H1 (cell line): ENCODE measurements at regions of chr6 and their contacts with region 1.

Region 1: GRCh38 chr6:151323791-151324487 is 67.4 kb downstream of the ZBTB2 start:
- DNase-seq: peak; percentile 63 to 97
- H3K4me3 ChIP-seq: no peak overlapping the region
- H3K27ac ChIP-seq: no peak overlapping the region
- H3K4me1 ChIP-seq: peaks cover 0 to 3% (median 0%) of the 10 kb centered on the region in 4 experiments; a peak in 3 of 7 replicates
- H3K27me3 ChIP-seq: peaks cover 0 to 6% (median 1%) of the 10 kb centered on the region in 4 experiments; a peak in 2 of 7 replicates
- CTCF ChIP-seq: peak; percentile 91 to 99 (median 98)
- EP300 ChIP-seq: no peak
- POLR2A ChIP-seq: no peak
- RAD21 ChIP-seq: peak; percentile 95 to 99

Region 2: DNA sequence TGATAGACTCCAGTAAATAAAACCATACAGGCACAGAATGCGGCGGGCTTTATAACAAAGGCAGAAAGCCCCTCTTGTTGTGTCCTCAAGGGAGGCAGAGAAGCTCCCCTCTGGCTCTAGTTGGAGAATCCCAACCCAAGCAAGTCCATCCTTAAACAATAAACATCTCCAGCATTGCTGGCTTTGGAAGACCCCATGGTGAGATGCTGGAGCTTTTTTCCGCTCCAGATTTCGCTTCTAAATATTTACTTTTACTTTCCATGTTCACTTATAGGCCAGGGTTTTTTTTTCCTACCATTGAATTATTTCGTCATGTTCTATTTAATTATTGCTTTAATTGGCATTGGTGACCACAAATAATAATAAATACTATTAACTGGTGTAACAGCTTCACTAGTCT is 282.3 kb before region 1 on chr6:
- CTCF ChIA-PET with region 1: interaction called, 10 read pairs
- POLR2A ChIA-PET with region 1: no interaction called
- DNase-seq: no peak
- H3K4me3 ChIP-seq: no peak overlapping the region
- H3K27ac ChIP-seq: no peak overlapping the region
- H3K4me1 ChIP-seq: peaks cover 8 to 18% (median 12%) of the 10 kb centered on the region in 4 experiments
- H3K27me3 ChIP-seq: no peaks in the 10 kb centered on the region
- CTCF ChIP-seq: no peak
- EP300 ChIP-seq: no peak
- POLR2A ChIP-seq: no peak
- RAD21 ChIP-seq: no peak

Region 3: DNA sequence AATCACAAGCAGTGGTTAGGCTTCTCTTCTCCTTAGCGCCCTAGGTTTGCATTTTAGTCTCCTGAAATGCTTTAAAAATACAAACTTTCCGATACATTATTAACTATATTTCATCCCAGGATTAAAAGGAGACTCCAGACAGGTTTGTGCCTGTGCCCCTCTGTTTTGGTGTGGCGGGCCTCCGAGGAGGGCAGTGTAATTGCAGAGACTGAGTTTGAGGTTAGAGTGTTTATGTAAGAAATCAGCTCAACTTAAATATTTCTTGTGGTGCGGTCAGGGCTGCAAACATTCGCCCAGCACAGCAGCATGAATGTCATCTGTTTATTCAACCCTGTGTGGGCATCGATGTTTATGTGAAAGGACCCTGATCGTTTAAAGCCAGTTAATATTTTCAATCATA is 214.6 kb before region 1 on chr6:
- CTCF ChIA-PET with region 1: interaction called, 12 read pairs
- POLR2A ChIA-PET with region 1: no interaction called
- DNase-seq: no peak
- H3K4me3 ChIP-seq: no peak overlapping the region
- H3K27ac ChIP-seq: no peak overlapping the region
- H3K4me1 ChIP-seq: no peaks in the 10 kb centered on the region
- H3K27me3 ChIP-seq: no peaks in the 10 kb centered on the region
- CTCF ChIP-seq: no peak
- EP300 ChIP-seq: no peak
- POLR2A ChIP-seq: no peak
- RAD21 ChIP-seq: no peak

Region 4: DNA sequence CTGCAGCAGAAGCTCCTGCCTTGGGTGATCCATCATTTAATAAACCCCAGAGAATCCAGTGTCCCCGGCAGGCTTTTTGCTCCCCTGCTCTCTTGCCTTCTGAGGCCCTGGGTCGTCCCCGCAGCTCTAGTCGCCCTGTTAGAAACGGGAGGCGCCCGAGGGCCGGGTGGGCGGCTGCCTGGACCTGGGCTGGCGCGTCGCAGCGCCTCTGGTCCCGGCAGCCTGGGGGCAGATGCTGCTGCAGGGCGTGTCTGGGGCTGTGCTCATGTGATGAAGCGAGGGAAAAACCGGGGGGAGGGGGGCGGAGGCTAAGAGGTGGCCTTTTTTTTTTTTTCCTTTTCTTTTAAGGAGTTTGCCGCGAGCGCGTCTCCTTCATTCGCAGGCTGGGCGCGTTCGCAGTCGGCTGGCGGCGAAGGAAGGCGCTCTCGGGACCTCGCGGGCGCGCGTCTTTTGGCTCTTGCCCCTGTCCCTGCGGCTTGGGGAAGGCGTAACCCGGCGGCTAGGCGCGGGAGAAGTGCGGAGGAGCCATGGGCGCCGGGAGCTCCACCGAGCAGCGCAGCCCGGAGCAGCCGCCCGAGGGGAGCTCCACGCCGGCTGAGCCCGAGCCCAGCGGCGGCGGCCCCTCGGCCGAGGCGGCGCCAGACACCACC is 83.8 kb before region 1 on chr6:
- CTCF ChIA-PET with region 1: interaction called, 8 read pairs
- POLR2A ChIA-PET with region 1: interaction called, 20 read pairs
- DNase-seq: peak; percentile 81 to 85
- H3K4me3 ChIP-seq: peak overlapping the region; percentile 61 to 97 (median 92)
- H3K27ac ChIP-seq: peak overlapping the region; percentile 78
- H3K4me1 ChIP-seq: peaks cover 3 to 12% (median 9%) of the 10 kb centered on the region in 4 experiments; a peak in 6 of 7 replicates
- H3K27me3 ChIP-seq: 0 out of 7 replicates have a peak, but pooled peaks cover 0 to 3% (median 0%) of the 10 kb centered on the region in 4 experiments
- CTCF ChIP-seq: peak in 1 of 3 experiments; percentile 24; a peak in 2 of 4 replicates
- EP300 ChIP-seq: no peak
- POLR2A ChIP-seq: peak; percentile 67 to 85
- RAD21 ChIP-seq: peak in 1 of 2 experiments; percentile 33; a peak in 3 of 4 replicates

Region 5: GRCh38 chr6:151335930-151336329 is 12.0 kb after region 1 on chr6:
- CTCF ChIA-PET with region 1: interaction called, 36 read pairs
- POLR2A ChIA-PET with region 1: no interaction called
- DNase-seq: no peak
- H3K4me3 ChIP-seq: no peak overlapping the region
- H3K27ac ChIP-seq: no peak overlapping the region
- H3K4me1 ChIP-seq: 0 out of 7 replicates have a peak, but pooled peaks cover 0 to 2% (median 0%) of the 10 kb centered on the region in 4 experiments
- H3K27me3 ChIP-seq: no peaks in the 10 kb centered on the region
- CTCF ChIP-seq: no peak
- EP300 ChIP-seq: no peak
- POLR2A ChIP-seq: no peak
- RAD21 ChIP-seq: no peak